Cardiac septum (tissue), 1 donor: ENCODE measurements at regions of chr3 and their contacts with region 1.

Region 1: GRCh38 chr3:152436707-152437590 is 168.2 kb downstream of the MBNL1 start:
- DNase-seq: no peak

Region 2: GRCh38 chr3:152183473-152183872 is 253.5 kb before region 1 on chr3:
- intact Hi-C with region 1: no loop called
- DNase-seq: no peak

Region 3: GRCh38 chr3:152405915-152406802 is 30.8 kb before region 1 on chr3:
- intact Hi-C with region 1: loop called (anchors 5 kb)
- DNase-seq: no peak